ENCODE measurements at regions of chr2 and their contacts with region 1.

Region 1: DNA sequence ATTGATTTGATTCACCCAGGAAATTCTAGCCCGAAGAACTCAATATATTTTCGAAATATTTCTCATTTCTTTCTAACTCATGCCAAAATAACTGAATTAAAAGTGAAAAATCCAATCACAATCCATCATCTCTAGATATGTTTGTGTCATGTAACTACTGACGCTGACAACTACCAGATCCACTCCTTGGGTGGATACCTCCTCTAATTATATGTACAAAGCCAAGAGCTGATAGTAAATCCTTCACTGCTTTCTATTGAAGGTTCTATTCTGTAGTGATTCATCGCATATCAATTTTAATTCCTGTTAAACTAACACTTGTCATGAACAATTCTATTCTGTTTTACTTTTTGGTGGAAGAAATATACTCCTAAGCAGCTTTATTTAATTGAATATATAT is 1056.6 kb upstream of the NXPH2 start:
- DNase-seq: no peak
- H3K4me3 ChIP-seq: no peak overlapping the region
- H3K27ac ChIP-seq: no peak overlapping the region
- H3K4me1 ChIP-seq: no peaks in the 10 kb centered on the region
- H3K27me3 ChIP-seq: no peaks in the 10 kb centered on the region
- CTCF ChIP-seq: no peak

Region 2: DNA sequence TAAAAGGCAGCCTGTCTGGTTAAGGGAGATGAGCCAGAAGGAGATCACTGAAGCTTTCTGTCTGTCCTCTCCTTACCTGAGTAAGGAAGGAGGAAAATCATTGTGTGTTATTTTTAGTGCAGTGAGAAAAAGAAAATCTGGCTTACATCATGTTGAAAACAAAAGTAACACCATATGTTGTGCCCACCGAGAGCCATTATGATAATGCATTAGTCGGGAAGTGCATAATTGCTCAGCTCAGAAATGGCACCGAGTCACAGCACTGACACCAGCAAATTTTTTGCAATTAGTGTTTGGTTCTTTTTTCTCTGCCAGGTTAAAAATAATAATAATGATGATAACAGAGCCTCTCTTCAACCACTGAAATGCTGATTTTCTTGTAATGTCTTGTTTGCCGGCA is 1825.9 kb before region 1 on chr2:
- CTCF ChIA-PET with region 1: no interaction called
- POLR2A ChIA-PET with region 1: no interaction called
- intact Hi-C with region 1: no loop called
- DNase-seq: no peak
- H3K4me3 ChIP-seq: no peak overlapping the region
- H3K27ac ChIP-seq: no peak overlapping the region
- H3K4me1 ChIP-seq: peaks cover 2% of the 10 kb centered on the region
- H3K27me3 ChIP-seq: no peaks in the 10 kb centered on the region
- CTCF ChIP-seq: no peak

Region 3: DNA sequence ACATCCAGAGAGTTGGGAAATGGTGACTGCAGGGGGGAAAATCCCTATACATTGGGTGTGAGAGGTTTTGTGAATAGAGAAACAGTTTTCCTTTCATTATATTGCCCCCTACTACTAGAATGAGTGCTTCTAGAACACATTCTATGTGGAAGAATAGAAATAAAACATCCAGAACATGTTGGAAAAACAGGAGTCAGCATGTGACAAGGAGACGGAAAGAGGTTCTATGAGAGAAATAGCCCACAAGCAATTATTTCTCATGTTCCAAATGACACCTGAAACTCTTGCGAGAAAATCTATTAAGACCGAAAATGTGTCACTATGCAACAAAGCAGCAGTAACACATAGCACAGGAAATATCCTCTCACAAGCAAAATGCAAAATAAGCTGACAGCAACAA is 1537.9 kb before region 1 on chr2:
- CTCF ChIA-PET with region 1: interaction called, 13 read pairs
- POLR2A ChIA-PET with region 1: no interaction called
- intact Hi-C with region 1: no loop called
- DNase-seq: no peak
- H3K4me3 ChIP-seq: no peak overlapping the region
- H3K27ac ChIP-seq: no peak overlapping the region
- H3K4me1 ChIP-seq: no peaks in the 10 kb centered on the region
- H3K27me3 ChIP-seq: no peaks in the 10 kb centered on the region
- CTCF ChIP-seq: no peak

Region 4: DNA sequence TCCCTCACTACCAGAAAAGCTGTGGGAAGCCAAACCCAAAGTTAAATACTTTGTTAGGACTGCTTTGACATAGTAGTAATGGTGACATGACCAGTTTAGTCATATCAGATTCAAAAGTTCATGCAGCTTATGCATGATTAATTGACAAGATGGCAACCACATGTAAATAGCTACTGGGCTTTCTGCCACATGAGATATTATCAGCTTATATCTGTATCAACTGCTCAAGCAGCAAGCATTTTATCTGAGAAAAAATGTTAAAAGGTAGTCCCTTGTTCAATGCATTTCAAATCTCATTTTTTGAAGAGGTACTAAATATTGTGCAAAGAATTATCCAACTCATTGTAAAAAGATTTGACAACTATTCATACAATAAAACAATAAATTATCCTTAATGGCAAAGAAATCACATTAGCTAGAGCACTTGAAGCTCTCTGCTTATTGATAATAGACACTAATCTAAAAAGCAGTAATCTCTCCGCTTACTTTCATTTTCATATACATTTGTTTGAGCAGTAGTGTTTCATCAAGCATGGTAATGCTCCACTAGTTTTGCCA is 63.0 kb before region 1 on chr2:
- CTCF ChIA-PET with region 1: no interaction called
- POLR2A ChIA-PET with region 1: no interaction called
- intact Hi-C with region 1: no loop called
- DNase-seq: no peak
- H3K4me3 ChIP-seq: no peak overlapping the region
- H3K27ac ChIP-seq: no peak overlapping the region
- H3K4me1 ChIP-seq: no peaks in the 10 kb centered on the region
- H3K27me3 ChIP-seq: no peaks in the 10 kb centered on the region
- CTCF ChIP-seq: no peak

Region 5: GRCh38 chr2:139813340-139813739 is 23.4 kb before region 1 on chr2:
- CTCF ChIA-PET with region 1: no interaction called
- POLR2A ChIA-PET with region 1: no interaction called
- intact Hi-C with region 1: no loop called
- DNase-seq: no peak
- H3K4me3 ChIP-seq: no peak overlapping the region
- H3K27ac ChIP-seq: no peak overlapping the region
- H3K4me1 ChIP-seq: no peaks in the 10 kb centered on the region
- H3K27me3 ChIP-seq: no peaks in the 10 kb centered on the region
- CTCF ChIP-seq: no peak